Ovary (tissue), 10 donors: ENCODE measurements at regions of chr12 and their contacts with region 1.

Region 1: DNA sequence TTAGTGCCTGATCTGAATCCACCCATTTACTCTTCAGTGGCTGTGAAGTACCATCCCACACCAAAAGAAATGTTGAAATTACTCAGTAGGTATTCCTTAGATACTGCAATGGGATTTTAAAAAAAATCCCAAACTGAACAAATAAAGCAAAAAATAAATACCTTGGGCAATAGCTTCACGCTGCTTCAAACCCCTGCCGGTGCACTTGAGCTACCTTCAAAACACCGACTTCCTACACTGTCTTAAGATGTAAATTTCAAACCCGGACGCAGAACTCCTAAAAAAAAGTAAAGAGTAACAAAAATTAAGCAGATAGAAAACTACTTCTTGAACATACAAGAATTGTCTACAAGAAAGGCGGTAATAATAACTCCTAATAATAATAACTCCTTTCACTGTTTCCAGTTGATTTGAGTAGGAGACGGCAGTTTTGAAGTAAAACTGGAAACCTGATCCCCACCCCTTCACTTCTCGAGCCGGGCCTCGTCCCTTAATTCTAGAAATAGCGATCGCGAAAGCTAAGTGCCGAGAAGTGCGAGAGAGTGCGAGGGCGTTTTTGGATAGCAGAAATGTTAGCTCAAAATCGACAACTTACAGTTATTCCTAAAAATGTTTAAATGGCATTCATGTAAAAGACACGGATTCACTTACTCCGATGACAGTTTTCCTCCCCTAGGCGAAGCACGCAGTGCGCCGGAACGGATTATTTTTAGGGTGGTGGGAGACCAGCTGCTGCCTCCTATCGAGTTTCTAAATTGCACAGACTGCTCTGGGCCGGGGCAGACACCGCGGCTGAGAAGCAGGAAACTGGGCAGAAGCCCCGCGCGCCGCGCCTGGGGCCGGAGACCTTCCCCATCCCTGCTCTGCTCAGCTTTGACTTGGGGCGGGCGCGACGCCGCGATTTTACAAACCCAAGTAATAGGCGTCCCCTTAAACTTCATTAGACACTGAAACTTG is at the start of gene ABCC9:
- DNase-seq: peak; percentile 64 to 80 (median 72)
- H3K4me3 ChIP-seq: peak within 1 kb of the TSS; percentile 50
- H3K27ac ChIP-seq: peak within 1 kb of the TSS; percentile 73 to 75
- H3K4me1 ChIP-seq: peaks cover 2% of the 10 kb centered on the region
- H3K27me3 ChIP-seq: no peaks in the 10 kb centered on the region
- CTCF ChIP-seq: peak in 1 of 3 donors; percentile 18
- EP300 ChIP-seq: no peak
- POLR2A ChIP-seq: peak; percentile 40
- total RNA-seq, gene ABCC9: 15.6 to 54.8 (median 21.3) TPM

Region 2: GRCh38 chr12:21239866-21240265 is 701.0 kb before region 1 on chr12:
- intact Hi-C with region 1: no loop called
- DNase-seq: no peak
- H3K4me3 ChIP-seq: no peak overlapping the region
- H3K27ac ChIP-seq: no peak overlapping the region
- H3K4me1 ChIP-seq: no peaks in the 10 kb centered on the region
- H3K27me3 ChIP-seq: no peaks in the 10 kb centered on the region
- CTCF ChIP-seq: no peak
- EP300 ChIP-seq: no peak
- POLR2A ChIP-seq: no peak

Region 3: DNA sequence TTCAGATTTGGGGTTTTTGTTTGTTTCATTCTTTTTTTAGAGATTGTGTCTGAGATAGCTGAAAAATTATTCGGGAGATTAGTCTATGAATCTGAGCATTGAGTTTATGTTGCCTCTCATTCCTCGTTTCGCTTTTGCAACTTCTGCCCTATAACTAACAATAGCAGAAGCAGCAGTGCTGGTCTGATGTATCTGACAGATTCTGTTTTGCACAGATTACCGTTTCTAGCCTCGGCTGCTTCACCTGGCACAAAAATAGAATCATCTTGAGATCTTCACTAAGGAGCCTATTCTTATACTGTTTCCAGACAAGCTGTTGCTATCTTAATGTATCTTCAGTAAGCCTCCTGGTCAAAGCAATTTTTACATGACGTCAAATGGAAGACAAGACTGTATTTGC is 195.6 kb before region 1 on chr12:
- intact Hi-C with region 1: no loop called
- DNase-seq: no peak
- H3K4me3 ChIP-seq: no peak overlapping the region
- H3K27ac ChIP-seq: no peak overlapping the region
- H3K4me1 ChIP-seq: no peaks in the 10 kb centered on the region
- H3K27me3 ChIP-seq: no peaks in the 10 kb centered on the region
- CTCF ChIP-seq: no peak
- EP300 ChIP-seq: no peak
- POLR2A ChIP-seq: no peak

Region 4: GRCh38 chr12:21764065-21764464 is 176.8 kb before region 1 on chr12:
- intact Hi-C with region 1: loop called in 1 of 4 experiments (anchors 10 kb)
- DNase-seq: no peak
- H3K4me3 ChIP-seq: no peak overlapping the region
- H3K27ac ChIP-seq: no peak overlapping the region
- H3K4me1 ChIP-seq: no peaks in the 10 kb centered on the region
- H3K27me3 ChIP-seq: no peaks in the 10 kb centered on the region
- CTCF ChIP-seq: no peak
- EP300 ChIP-seq: no peak
- POLR2A ChIP-seq: no peak

Region 5: DNA sequence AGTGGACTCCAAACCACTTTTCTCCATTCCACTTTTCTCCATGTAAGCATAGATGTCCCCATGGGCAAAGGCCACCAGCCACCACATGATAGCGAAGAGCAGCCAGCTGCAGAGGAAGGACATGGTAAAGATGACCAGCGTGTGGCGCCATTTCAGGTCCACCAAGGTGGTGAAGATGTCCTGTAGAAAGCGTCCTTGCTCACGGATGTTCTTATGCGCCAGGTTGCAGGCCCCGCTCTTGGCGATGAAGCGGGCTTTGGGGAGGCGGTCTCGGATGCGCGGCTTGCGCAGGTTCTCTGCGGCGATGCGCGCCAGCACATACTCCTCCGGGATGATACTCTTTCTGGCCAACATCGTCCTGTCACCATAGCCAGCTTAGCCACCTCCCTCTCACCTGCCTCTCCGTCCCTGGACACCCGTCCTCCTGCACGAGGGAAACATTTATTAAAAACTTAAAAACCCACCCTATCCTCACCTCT is 167.5 kb before region 1 on chr12:
- intact Hi-C with region 1: loop called in 3 of 4 experiments (anchors 5 to 10 kb)
- DNase-seq: peak; percentile 52 to 70 (median 58)
- H3K4me3 ChIP-seq: peak overlapping the region; percentile 63
- H3K27ac ChIP-seq: peak overlapping the region in 1 of 2 donors; percentile 81
- H3K4me1 ChIP-seq: no peaks in the 10 kb centered on the region
- H3K27me3 ChIP-seq: no peaks in the 10 kb centered on the region
- CTCF ChIP-seq: peak in 1 of 3 donors; percentile 23
- EP300 ChIP-seq: no peak
- POLR2A ChIP-seq: no peak